ENCODE measurements at regions of chr5 and their contacts with region 1.

Region 1: DNA sequence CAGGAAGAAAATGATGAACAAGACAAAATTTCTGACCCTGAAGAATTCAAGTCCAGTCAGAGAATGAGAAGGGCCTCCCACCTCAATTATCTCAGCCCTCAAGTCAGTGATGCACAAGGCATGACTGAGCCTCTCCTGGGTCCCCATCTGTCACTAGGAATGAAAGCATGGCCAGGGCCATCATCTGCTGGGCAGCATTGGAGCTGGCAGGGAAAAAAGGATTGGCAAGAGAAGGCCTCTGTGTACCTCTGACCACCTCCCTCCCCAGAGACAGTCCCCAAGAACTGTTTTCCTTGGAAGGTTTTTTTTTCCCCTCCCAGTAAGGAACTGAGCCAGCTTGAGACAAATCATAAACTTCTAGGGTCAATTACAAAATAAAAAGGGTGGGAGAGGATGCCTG is 76.7 kb downstream of the KLHL3 start:
- DNase-seq: no peak
- ATAC-seq: peak; percentile 26

Region 2: GRCh38 chr5:137730336-137730735 is 71.1 kb after region 1 on chr5:
- intact Hi-C with region 1: no loop called
- DNase-seq: no peak
- ATAC-seq: no peak

Region 3: DNA sequence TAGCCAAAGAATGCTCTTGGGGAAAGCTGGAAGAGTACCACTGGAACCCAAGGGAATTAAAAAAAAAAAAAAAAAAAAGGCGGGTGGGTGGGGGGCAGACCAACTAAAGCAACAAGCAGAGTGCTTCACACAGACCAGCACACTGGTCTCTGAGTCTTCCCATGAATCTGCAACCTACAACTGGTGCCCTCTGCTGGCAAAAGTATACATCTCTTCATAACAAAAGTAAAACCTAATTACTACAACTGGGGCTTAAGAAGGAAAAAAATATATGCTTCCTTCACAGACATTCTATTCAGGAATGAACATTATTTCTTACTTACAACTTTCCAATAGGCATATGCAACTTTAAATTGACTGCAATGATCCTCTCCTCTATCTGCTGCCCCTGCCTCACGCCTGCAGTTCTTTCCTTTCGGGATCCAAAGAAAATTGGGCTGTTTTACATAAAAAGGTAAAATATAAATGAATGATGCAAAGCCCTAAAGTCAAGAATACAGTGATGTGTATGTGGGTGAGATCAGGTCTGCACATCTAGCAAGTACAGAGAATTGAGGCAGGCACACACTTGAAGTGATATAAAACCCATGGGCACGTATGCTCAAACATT is 83.9 kb after region 1 on chr5:
- intact Hi-C with region 1: loop called (anchors 5 kb)
- DNase-seq: no peak
- ATAC-seq: peak; percentile 87